ENCODE measurements at regions of chr3 and their contacts with region 1.

Region 1: DNA sequence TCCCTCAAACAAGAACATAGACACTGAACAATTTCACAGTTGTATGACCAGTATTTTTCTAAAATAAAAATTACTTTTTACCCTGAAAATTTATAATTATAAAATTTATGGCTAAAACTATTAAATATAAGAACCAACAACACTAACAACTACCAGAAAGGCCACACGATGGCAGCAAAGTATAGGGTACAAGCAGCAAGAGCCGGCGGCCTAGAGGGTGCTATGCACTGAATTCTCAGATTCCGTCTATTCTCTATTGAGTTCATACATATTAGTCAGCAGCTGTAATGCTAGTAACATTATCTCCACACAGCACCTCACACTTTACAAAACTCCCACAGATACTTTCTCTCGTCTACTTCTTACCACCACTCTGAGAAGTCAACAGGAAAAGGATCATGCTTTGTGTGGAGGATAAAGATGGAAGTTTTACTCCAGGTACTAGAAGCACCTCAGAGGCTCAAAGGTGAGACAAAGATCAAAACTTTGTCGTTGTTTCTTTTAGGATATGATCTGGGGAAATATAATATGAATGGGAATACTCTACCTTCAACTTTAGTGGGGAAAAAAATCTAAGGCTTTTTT is 160.5 kb downstream of the FGF12 start:
- DNase-seq: peak; percentile 86
- ATAC-seq: peak; percentile 81

Region 2: GRCh38 chr3:192802957-192803899 is 236.4 kb after region 1 on chr3:
- intact Hi-C with region 1: loop called (anchors 5 kb)
- DNase-seq: no peak
- ATAC-seq: peak; percentile 50

Region 3: DNA sequence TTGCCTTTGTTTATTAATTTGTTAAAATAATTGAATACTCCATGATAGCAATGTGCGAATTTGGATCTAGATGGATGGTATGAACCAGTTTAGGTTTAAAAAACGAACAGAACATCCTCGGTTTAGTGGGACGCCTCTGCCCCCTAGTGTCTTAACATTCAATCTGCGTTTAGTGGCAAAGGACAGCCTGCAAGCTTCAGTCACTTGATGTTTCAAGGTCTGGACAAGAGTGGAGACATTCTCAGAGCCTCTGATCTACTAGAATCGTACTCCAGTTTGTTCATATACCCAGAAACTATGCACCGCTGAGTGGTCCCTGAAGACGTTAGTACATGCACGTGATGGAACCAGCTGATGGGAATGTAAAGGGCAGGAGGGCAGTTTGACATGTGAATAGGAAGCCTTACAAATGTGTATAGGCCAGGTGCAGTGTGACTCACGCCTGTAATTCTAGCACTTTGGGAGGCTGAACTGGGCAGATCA is 1005.7 kb after region 1 on chr3:
- intact Hi-C with region 1: loop called (anchors 10 kb)
- DNase-seq: peak; percentile 74
- ATAC-seq: peak; percentile 81

Measured in sciatic nerve (tissue), 2 donors.